Activated CD4-positive, alpha-beta memory T cell treated with anti-CD3 and anti-CD28 coated beads for 36 hours (primary cell): ENCODE measurements at regions of chr20 and their contacts with region 1.

Region 1: GRCh38 chr20:37270576-37271420 is 9.2 kb upstream of the GHRH start:
- DNase-seq: no peak
- H3K4me3 Mint-ChIP-seq: no peak overlapping the region
- H3K27ac Mint-ChIP-seq: no peak overlapping the region
- H3K4me1 Mint-ChIP-seq: no peaks in the 10 kb centered on the region
- H3K27me3 Mint-ChIP-seq: no peaks in the 10 kb centered on the region

Region 2: GRCh38 chr20:37534401-37535157 is 263.8 kb after region 1 on chr20:
- CTCF ChIA-PET with region 1: interaction called, 70 read pairs
- POLR2A ChIA-PET with region 1: interaction called, 3 read pairs
- intact Hi-C with region 1: loop called (anchors 1 kb)
- DNase-seq: peak; percentile 37
- H3K4me3 Mint-ChIP-seq: no peak overlapping the region
- H3K27ac Mint-ChIP-seq: no peak overlapping the region
- H3K4me1 Mint-ChIP-seq: peaks cover 4% of the 10 kb centered on the region
- H3K27me3 Mint-ChIP-seq: peaks cover 2% of the 10 kb centered on the region

Region 3: DNA sequence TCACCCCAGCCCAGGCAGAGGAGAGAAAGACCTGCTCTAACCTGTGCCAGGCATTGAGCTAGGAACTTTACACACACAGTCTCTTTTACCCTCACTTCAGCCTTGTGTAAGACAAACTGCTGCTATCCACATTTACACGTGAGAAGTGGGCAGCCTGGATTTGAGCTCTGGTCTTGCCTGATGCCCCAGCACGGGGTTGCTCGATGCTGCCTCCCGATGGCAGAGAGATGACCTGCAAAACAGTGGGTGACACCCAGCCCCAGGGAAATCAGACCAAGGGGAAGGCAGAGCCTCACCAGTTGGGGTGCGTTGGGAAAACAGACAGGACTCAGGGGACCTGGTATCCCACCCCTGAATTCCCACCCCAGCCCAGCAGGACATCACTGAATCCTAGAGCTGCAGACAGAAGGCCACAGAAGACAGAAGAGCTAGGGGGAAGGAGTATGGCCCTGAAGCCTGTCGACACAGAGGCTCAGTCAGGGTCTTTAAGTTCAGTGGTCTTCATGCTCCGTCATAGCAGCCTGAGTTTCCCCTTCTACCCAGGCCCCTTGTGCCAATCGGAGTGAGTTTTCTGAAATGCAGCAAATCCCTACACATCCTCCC is 1034.1 kb after region 1 on chr20:
- CTCF ChIA-PET with region 1: no interaction called
- POLR2A ChIA-PET with region 1: no interaction called
- intact Hi-C with region 1: no loop called
- DNase-seq: peak; percentile 45
- H3K4me3 Mint-ChIP-seq: no peak overlapping the region
- H3K27ac Mint-ChIP-seq: no peak overlapping the region
- H3K4me1 Mint-ChIP-seq: peaks cover 8% of the 10 kb centered on the region
- H3K27me3 Mint-ChIP-seq: peaks cover 45% of the 10 kb centered on the region